ENCODE measurements at regions of chr6 and their contacts with region 1.

Region 1: DNA sequence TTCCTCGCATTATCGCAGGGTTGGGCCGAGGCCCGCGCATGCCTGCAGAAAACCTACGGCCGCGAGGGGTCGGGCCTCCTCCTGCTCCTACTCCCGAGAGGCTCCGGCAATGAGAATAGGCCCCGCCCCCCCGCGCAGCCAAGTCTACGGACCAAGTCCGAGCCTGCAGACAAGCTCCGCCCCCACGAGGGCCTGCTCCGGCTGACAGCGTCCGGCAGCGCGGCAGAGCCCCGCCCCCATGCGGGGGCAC is 3.1 kb upstream of the GPSM3 start:
- DNase-seq: peak; percentile 99 to 100 (median 100)
- ATAC-seq: peak; percentile 80
- H3K4me3 ChIP-seq: peak overlapping the region; percentile 85 to 87
- H3K4me3 Mint-ChIP-seq: peak overlapping the region; percentile 90
- H3K27ac ChIP-seq: peak overlapping the region; percentile 94 to 97
- H3K27ac Mint-ChIP-seq: peak overlapping the region; percentile 95
- H3K4me1 ChIP-seq: peaks cover 33% of the 10 kb centered on the region
- H3K4me1 Mint-ChIP-seq: peaks cover 35% of the 10 kb centered on the region
- H3K27me3 ChIP-seq: no peaks in the 10 kb centered on the region
- H3K27me3 Mint-ChIP-seq: no peaks in the 10 kb centered on the region
- CTCF ChIP-seq: peak; percentile 10

Region 2: DNA sequence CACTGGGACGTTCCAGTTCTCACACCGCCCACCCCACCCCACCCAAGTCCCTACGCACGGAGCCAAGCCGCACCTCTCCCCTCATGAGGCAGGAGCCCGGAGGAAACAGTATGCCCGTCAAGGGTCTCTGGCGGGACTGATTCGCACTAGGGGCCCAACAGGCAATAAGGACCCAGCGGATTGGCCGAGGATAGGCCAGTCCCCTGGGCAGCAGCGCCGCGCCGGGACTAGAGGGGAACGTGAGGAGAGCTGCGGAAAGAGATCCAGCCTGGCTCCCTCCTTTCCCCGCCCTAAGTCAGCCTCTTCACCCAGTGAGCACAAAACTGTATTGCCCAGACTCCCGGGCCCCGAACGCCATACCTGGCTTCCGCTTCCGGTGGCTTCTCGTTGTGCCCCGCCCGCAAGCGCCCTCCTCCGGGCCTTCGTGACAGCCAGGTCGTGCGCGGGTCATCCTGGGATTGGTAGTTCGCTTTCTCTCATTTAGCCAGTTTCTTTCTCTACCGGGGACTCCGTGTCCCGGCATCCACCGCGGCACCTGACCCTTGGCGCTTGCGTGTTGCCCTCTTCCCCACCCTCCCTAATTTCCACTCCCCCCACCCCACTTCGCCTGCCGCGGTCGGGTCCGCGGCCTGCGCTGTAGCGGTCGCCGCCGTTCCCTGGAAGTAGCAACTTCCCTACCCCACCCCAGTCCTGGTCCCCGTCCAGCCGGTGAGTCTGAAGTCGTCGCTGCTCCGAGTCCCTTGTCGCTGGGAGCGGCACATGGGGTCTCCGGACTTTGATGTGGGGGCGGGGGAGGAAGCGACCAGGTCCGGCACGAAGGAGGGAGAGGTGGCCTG is 529.9 kb before region 1 on chr6 and contains the start of gene CSNK2B:
- CTCF ChIA-PET with region 1: no interaction called
- POLR2A ChIA-PET with region 1: no interaction called
- intact Hi-C with region 1: loop called in 1 of 2 experiments (anchors 5 kb)
- DNase-seq: peak; percentile 95 to 99 (median 98)
- ATAC-seq: peak; percentile 84
- H3K4me3 ChIP-seq: peak within 1 kb of the TSS; percentile 91 to 94
- H3K4me3 Mint-ChIP-seq: peak within 1 kb of the TSS; percentile 95
- H3K27ac ChIP-seq: peak within 1 kb of the TSS; percentile 96 to 99
- H3K27ac Mint-ChIP-seq: peak within 1 kb of the TSS; percentile 98
- H3K4me1 ChIP-seq: peaks cover 44% of the 10 kb centered on the region
- H3K4me1 Mint-ChIP-seq: peaks cover 56% of the 10 kb centered on the region
- H3K27me3 ChIP-seq: no peaks in the 10 kb centered on the region
- H3K27me3 Mint-ChIP-seq: no peaks in the 10 kb centered on the region
- CTCF ChIP-seq: no peak
- total RNA-seq, gene CSNK2B: 80.9 to 86.1 TPM

Region 3: GRCh38 chr6:32118782-32119628 is 76.6 kb before region 1 on chr6:
- CTCF ChIA-PET with region 1: interaction called, 6 read pairs
- POLR2A ChIA-PET with region 1: interaction called, 3 read pairs
- intact Hi-C with region 1: loop called in 1 of 2 experiments (anchors 2 kb)
- DNase-seq: peak; percentile 46 to 80 (median 70)
- ATAC-seq: peak; percentile 86
- H3K4me3 ChIP-seq: no peak overlapping the region
- H3K4me3 Mint-ChIP-seq: no peak overlapping the region
- H3K27ac ChIP-seq: no peak overlapping the region
- H3K27ac Mint-ChIP-seq: peak overlapping the region; percentile 62
- H3K4me1 ChIP-seq: no peaks in the 10 kb centered on the region
- H3K4me1 Mint-ChIP-seq: peaks cover 8% of the 10 kb centered on the region
- H3K27me3 ChIP-seq: no peaks in the 10 kb centered on the region
- H3K27me3 Mint-ChIP-seq: no peaks in the 10 kb centered on the region
- CTCF ChIP-seq: peak; percentile 79

Region 4: DNA sequence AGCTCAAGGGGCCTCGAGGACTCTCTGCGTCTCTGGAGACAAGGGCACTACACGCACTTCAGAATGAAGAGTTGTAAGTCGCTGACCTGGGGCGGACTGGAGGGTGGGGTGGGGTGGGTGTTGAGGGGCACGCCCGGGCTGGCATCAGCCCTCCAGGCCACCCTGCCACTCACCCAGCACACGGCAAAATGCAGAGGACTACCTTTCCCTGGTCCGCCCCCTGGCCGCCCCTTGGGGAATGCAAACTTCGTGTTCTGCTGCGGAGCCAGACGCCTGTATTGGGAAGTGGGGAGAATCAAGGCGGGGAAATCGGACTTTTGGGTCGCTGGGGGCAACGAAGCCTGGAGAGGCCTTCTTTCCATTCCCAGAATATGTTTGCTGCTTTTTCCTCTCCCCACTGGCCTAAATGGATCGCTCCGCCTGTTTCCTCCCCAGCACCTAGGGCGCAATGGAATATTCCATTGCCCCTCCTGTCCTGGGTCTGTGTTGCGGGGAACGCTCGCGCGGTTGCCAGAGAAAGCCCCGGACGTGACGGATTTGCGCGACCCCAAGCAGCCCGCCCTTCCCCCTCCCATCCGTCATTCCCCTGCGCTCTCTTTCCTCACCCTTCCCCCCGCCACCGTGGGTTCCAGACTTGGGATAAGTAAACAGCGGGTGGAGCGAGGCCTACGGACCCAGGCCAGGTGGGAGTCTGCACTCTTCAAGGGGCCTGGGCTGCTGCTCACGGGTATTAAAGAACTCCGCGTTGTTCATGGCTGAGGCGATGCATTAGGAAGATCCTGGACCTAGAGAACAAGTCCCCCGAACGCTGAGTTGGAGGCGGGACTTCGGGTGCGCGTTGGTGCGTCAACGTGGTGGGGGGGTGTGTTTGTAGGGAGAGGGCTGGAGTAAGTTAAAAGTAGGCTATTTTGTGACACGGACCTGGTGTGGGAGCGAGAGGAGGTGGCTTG is 41.7 kb before region 1 on chr6 and contains the start of gene PPT2:
- CTCF ChIA-PET with region 1: interaction called, 4 read pairs
- POLR2A ChIA-PET with region 1: interaction called, 5 read pairs
- intact Hi-C with region 1: loop called (anchors 1 kb)
- DNase-seq: peak; percentile 52 to 95 (median 80)
- ATAC-seq: peak; percentile 74
- H3K4me3 ChIP-seq: peak within 1 kb of the TSS; percentile 84 to 88
- H3K4me3 Mint-ChIP-seq: peak within 1 kb of the TSS; percentile 97
- H3K27ac ChIP-seq: peak within 1 kb of the TSS; percentile 67 to 76
- H3K27ac Mint-ChIP-seq: peak within 1 kb of the TSS; percentile 85
- H3K4me1 ChIP-seq: peaks cover 40% of the 10 kb centered on the region
- H3K4me1 Mint-ChIP-seq: peaks cover 59% of the 10 kb centered on the region
- H3K27me3 ChIP-seq: peaks cover 0 to 5% of the 10 kb centered on the region in 2 experiments
- H3K27me3 Mint-ChIP-seq: peaks cover 8% of the 10 kb centered on the region
- CTCF ChIP-seq: no peak
- total RNA-seq, gene PPT2: 11.1 to 25.5 TPM

Region 5: DNA sequence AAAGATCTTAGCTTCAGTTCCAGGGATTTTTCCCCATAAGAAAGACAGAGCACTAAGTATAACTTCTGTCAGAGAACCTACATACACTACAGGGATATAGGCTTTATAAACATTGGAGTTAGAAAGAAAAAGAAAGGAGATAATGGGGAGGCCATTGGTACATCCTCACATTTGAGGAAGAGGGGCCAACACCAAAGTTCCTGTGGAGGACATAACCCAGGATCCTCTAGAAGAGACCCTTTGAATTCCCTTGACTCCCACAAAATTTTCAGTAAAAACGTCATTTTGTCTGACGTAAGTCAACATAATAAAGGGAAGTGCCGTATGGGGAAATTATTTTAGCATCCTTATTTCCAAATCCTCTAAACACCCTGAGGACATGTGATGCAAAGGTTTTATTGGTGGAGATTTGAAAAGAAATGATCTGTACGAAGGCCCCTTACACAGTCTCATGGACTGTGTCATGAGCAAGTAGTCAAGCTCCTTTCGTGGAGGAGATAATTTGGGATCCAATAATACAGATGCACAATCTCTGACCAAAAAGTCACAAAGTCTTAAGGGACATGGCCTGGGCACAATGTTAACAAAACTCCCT is 277.3 kb after region 1 on chr6:
- CTCF ChIA-PET with region 1: no interaction called
- POLR2A ChIA-PET with region 1: no interaction called
- intact Hi-C with region 1: no loop called
- DNase-seq: no peak
- ATAC-seq: no peak
- H3K4me3 ChIP-seq: no peak overlapping the region
- H3K4me3 Mint-ChIP-seq: no peak overlapping the region
- H3K27ac ChIP-seq: no peak overlapping the region
- H3K27ac Mint-ChIP-seq: no peak overlapping the region
- H3K4me1 ChIP-seq: no peaks in the 10 kb centered on the region
- H3K4me1 Mint-ChIP-seq: peaks cover 2% of the 10 kb centered on the region
- H3K27me3 ChIP-seq: no peaks in the 10 kb centered on the region
- H3K27me3 Mint-ChIP-seq: peaks cover 22% of the 10 kb centered on the region
- CTCF ChIP-seq: no peak

Region 6: GRCh38 chr6:32843979-32844838 is 648.6 kb after region 1 on chr6 and contains the start of gene PSMB8:
- CTCF ChIA-PET with region 1: no interaction called
- POLR2A ChIA-PET with region 1: no interaction called
- intact Hi-C with region 1: loop called in 1 of 2 experiments (anchors 1 kb)
- DNase-seq: peak; percentile 96 to 99 (median 99)
- ATAC-seq: peak; percentile 75
- H3K4me3 ChIP-seq: peak within 1 kb of the TSS; percentile 99
- H3K4me3 Mint-ChIP-seq: peak within 1 kb of the TSS; percentile 99
- H3K27ac ChIP-seq: peak within 1 kb of the TSS; percentile 96 to 100
- H3K27ac Mint-ChIP-seq: peak within 1 kb of the TSS; percentile 99
- H3K4me1 ChIP-seq: peaks cover 79% of the 10 kb centered on the region
- H3K4me1 Mint-ChIP-seq: peaks cover 83% of the 10 kb centered on the region
- H3K27me3 ChIP-seq: no peaks in the 10 kb centered on the region
- H3K27me3 Mint-ChIP-seq: no peaks in the 10 kb centered on the region
- CTCF ChIP-seq: no peak
- total RNA-seq, gene PSMB8: 108 to 117 TPM

Region 7: DNA sequence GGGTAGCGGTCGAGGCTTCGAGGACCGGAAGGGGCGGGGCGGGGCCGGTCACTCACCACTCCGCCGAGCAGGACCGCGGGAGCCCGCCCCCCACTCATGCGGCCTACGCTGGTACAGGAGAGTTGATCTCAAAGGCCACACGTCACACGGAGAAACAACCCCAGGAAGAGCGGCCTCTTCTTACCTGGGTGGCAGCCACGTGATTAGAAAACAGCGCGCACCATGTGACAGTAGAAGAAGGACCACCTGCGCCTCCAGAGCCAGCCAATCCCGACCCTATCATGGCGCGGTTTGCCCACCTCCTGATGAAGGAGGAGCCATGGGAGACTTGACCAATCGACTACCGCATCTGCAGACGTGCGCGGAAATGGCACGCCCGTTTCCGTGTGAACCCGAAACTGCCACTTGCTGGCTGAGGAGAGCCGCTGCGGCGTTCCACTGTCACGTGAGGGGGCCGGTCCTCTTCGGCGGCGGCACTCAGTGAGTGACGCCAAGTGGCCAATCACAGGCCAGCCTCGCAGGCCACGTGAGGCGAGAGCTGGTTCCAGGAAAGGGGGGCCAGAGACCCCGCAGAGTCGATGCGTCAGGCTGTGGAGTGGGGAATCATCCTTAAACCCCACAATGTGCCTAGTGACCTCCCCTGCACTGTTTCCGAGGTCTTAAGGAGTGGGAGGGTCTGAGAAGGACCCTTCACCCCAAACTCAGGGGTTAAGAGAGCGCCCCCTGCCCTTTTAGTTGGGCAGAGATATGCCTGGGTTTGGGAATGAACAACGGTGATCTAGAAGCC is 1222.5 kb after region 1 on chr6 and contains the start of gene CUTA:
- CTCF ChIA-PET with region 1: no interaction called
- POLR2A ChIA-PET with region 1: no interaction called
- intact Hi-C with region 1: loop called (anchors 10 kb)
- DNase-seq: peak; percentile 96 to 100 (median 99)
- ATAC-seq: peak; percentile 87
- H3K4me3 ChIP-seq: peak within 1 kb of the TSS; percentile 68 to 70
- H3K4me3 Mint-ChIP-seq: peak within 1 kb of the TSS; percentile 94
- H3K27ac ChIP-seq: peak within 1 kb of the TSS; percentile 83 to 88
- H3K27ac Mint-ChIP-seq: peak within 1 kb of the TSS; percentile 97
- H3K4me1 ChIP-seq: peaks cover 68% of the 10 kb centered on the region
- H3K4me1 Mint-ChIP-seq: peaks cover 83% of the 10 kb centered on the region
- H3K27me3 ChIP-seq: no peaks in the 10 kb centered on the region
- H3K27me3 Mint-ChIP-seq: no peaks in the 10 kb centered on the region
- CTCF ChIP-seq: peak; percentile 27
- total RNA-seq, gene CUTA: 159 to 177 TPM

Measured in CD8-positive, alpha-beta T cell (primary cell).